GM12878 (cell line): ENCODE measurements at regions of chr5 and their contacts with region 1.

Region 1: GRCh38 chr5:64634997-64635686 is 55.2 kb upstream of the SHISAL2B start:
- DNase-seq: no peak
- ATAC-seq: peak; percentile 53
- H3K4me3 ChIP-seq: no peak overlapping the region
- H3K27ac ChIP-seq: no peak overlapping the region
- H3K4me1 ChIP-seq: 0 out of 2 replicates have a peak, but pooled peaks cover 5% of the 10 kb centered on the region
- H3K27me3 ChIP-seq: no peaks in the 10 kb centered on the region; a peak in 1 of 4 replicates
- CTCF ChIP-seq: peak; percentile 47 to 59 (median 58); a peak in 5 of 6 replicates
- EP300 ChIP-seq: no peak
- POLR2A ChIP-seq: no peak
- RAD21 ChIP-seq: peak; percentile 80

Region 2: GRCh38 chr5:64100197-64100596 is 534.9 kb before region 1 on chr5:
- CTCF ChIA-PET with region 1: no interaction called
- POLR2A ChIA-PET with region 1: no interaction called
- RAD21 ChIA-PET with region 1: no interaction called
- SMC1A ChIA-PET with region 1: no interaction called
- in situ Hi-C with region 1: no loop called
- intact Hi-C with region 1: no loop called
- DNase-seq: no peak
- ATAC-seq: no peak
- H3K4me3 ChIP-seq: no peak overlapping the region
- H3K27ac ChIP-seq: no peak overlapping the region
- H3K4me1 ChIP-seq: no peaks in the 10 kb centered on the region
- H3K27me3 ChIP-seq: no peaks in the 10 kb centered on the region
- CTCF ChIP-seq: no peak
- EP300 ChIP-seq: no peak
- POLR2A ChIP-seq: no peak
- RAD21 ChIP-seq: no peak

Region 3: GRCh38 chr5:64646169-64646568 is 11.0 kb after region 1 on chr5:
- CTCF ChIA-PET with region 1: interaction called, 16 read pairs
- POLR2A ChIA-PET with region 1: no interaction called
- RAD21 ChIA-PET with region 1: interaction called, 3 read pairs
- SMC1A ChIA-PET with region 1: interaction called, 5 read pairs
- in situ Hi-C with region 1: no loop called
- intact Hi-C with region 1: no loop called
- DNase-seq: no peak
- ATAC-seq: no peak
- H3K4me3 ChIP-seq: no peak overlapping the region
- H3K27ac ChIP-seq: no peak overlapping the region
- H3K4me1 ChIP-seq: no peaks in the 10 kb centered on the region
- H3K27me3 ChIP-seq: no peaks in the 10 kb centered on the region
- CTCF ChIP-seq: no peak
- EP300 ChIP-seq: no peak
- POLR2A ChIP-seq: no peak
- RAD21 ChIP-seq: no peak

Region 4: DNA sequence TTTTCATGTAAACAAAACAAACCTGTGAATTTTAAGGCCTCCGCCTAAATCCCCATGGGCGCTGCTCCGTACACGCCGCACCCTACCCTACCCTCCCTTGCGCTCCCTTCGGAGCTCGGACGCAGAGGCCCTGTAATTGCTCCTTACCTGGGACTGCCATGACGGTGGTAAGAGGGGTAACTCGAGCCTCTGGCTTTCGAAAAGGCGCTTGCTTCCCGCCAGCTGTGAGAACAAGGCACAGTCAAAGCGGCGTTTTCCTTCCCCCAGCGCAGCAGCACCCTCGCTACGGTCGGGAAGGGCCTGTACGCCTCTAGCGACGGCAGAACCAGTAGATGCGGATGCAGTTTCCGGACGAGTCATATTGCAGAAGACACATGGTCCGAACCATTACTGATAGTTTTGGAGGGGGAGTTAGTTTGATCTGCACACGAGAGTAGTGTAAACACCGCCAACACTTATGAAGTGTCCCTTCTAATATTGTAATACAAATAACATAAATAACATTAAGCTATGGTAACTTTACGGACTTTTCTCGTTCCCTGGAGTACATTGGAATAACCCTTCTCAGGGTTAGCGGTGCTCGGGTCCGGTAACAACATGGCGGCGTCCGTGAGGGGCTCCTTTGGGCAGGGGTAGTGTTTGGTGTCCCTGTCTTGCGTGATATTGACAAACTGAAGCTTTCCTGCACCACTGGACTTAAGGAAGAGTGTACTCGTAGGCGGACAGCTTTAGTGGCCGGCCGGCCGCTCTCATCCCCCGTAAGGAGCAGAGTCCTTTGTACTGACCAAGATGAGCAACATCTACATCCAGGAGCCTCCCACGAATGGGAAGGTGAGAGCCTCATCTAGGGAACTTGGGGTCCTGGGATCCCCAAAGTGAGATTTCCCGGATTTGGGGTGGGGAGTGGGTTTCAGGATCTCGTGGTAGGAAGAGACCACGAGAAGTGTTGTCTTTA is 133.5 kb after region 1 on chr5 and contains the starts of genes CWC27 and SREK1IP1:
- CTCF ChIA-PET with region 1: interaction called, 28 read pairs
- POLR2A ChIA-PET with region 1: no interaction called
- RAD21 ChIA-PET with region 1: interaction called, 4 read pairs
- SMC1A ChIA-PET with region 1: interaction called, 13 read pairs
- in situ Hi-C with region 1: no loop called
- intact Hi-C with region 1: no loop called
- DNase-seq: peak; percentile 79
- ATAC-seq: peak; percentile 91
- H3K4me3 ChIP-seq: peak within 1 kb of the TSS; percentile 94
- H3K27ac ChIP-seq: peak within 1 kb of the TSS; percentile 94
- H3K4me1 ChIP-seq: peaks cover 13% of the 10 kb centered on the region
- H3K27me3 ChIP-seq: no peaks in the 10 kb centered on the region
- CTCF ChIP-seq: peak in 1 of 3 experiments; percentile 16; a peak in 1 of 6 replicates
- EP300 ChIP-seq: peak in 1 of 2 experiments; percentile 28; a peak in 1 of 4 replicates
- POLR2A ChIP-seq: peak; percentile 93
- RAD21 ChIP-seq: no peak
- polyA plus RNA-seq, gene CWC27: 55.4 to 59.8 TPM
- polyA plus RNA-seq, gene SREK1IP1: 59.2 to 60.3 TPM

Region 5: DNA sequence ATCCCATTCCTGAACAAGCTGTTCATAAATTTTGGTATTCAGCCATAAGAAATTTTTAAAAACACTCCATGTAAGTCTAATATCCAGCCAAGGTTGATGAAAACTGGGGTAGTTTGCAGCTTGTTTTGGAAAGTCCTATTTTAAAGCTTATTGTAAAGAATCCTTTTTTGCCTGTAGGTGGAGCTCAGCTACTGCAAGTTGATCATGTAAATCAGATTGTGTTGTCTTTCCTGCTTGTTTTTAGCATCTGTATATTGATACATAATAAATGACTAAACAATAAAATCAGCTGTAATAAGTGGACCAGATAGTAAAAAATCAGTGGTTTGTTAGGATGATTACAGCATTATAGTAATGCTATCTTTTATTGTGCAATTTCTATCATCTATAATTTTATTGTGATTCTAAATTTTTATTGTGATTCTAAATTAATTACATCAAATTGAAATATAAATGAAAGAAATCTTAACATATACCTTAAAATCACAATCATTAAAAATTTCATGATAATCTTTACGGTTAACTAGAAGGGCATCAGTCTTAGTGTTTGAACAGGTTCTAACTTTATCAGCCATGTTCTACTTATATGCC is 176.0 kb after region 1 on chr5:
- CTCF ChIA-PET with region 1: interaction called, 15 read pairs
- POLR2A ChIA-PET with region 1: no interaction called
- RAD21 ChIA-PET with region 1: no interaction called
- SMC1A ChIA-PET with region 1: interaction called, 3 read pairs
- in situ Hi-C with region 1: no loop called
- intact Hi-C with region 1: no loop called
- DNase-seq: peak; percentile 5
- ATAC-seq: peak; percentile 69
- H3K4me3 ChIP-seq: no peak overlapping the region
- H3K27ac ChIP-seq: no peak overlapping the region
- H3K4me1 ChIP-seq: peaks cover 12% of the 10 kb centered on the region
- H3K27me3 ChIP-seq: no peaks in the 10 kb centered on the region
- CTCF ChIP-seq: peak; percentile 54 to 72 (median 56); a peak in 5 of 6 replicates
- EP300 ChIP-seq: no peak
- POLR2A ChIP-seq: no peak
- RAD21 ChIP-seq: peak; percentile 92

Region 6: GRCh38 chr5:65035211-65036206 is 400.4 kb after region 1 on chr5:
- CTCF ChIA-PET with region 1: no interaction called
- POLR2A ChIA-PET with region 1: no interaction called
- RAD21 ChIA-PET with region 1: no interaction called
- SMC1A ChIA-PET with region 1: no interaction called
- in situ Hi-C with region 1: no loop called
- intact Hi-C with region 1: no loop called
- DNase-seq: peak; percentile 40
- ATAC-seq: peak; percentile 89
- H3K4me3 ChIP-seq: peak overlapping the region; percentile 70
- H3K27ac ChIP-seq: peak overlapping the region; percentile 90
- H3K4me1 ChIP-seq: peaks cover 15% of the 10 kb centered on the region
- H3K27me3 ChIP-seq: no peaks in the 10 kb centered on the region
- CTCF ChIP-seq: no peak
- EP300 ChIP-seq: peak in 1 of 2 experiments; percentile 42; a peak in 1 of 4 replicates
- POLR2A ChIP-seq: peak; percentile 79
- RAD21 ChIP-seq: 0 out of 2 replicates have a peak, but pooled peaks have one; percentile 1